Breast epithelium (tissue), 4 donors: ENCODE measurements at regions of chr1 and their contacts with region 1.

Region 1: DNA sequence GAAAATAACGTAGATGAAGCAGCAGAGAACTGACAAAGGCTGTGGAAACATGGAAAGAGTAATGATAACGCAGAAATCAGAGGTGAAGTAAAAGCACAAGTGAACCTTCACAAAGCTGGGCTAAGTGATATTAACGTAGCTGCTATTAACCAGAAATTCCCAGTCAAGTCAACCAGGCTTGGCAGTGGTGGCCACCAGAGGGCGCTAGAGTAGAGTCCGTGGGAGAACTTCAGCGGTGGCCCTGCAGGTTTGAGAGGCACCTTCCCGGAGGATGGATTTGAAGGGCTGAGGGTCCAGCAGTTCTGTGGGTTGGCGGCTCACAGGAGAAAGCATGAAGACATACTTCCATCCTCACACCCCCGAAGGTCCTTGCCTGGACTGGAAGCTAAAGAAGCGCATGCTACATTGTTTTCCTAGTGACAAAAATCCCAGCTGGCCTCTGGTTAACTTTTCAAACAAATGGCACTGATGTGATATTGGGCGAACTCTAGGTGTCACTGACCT is 81.7 kb upstream of the ZNF648 start:
- DNase-seq: peak; percentile 89 to 97
- H3K4me3 ChIP-seq: no peak overlapping the region
- H3K27ac ChIP-seq: peak overlapping the region; percentile 94 to 98
- H3K4me1 ChIP-seq: peaks cover 13 to 15% of the 10 kb centered on the region in 2 donors
- H3K27me3 ChIP-seq: no peaks in the 10 kb centered on the region
- CTCF ChIP-seq: peak; percentile 95 to 98 (median 96)
- POLR2A ChIP-seq: no peak

Region 2: DNA sequence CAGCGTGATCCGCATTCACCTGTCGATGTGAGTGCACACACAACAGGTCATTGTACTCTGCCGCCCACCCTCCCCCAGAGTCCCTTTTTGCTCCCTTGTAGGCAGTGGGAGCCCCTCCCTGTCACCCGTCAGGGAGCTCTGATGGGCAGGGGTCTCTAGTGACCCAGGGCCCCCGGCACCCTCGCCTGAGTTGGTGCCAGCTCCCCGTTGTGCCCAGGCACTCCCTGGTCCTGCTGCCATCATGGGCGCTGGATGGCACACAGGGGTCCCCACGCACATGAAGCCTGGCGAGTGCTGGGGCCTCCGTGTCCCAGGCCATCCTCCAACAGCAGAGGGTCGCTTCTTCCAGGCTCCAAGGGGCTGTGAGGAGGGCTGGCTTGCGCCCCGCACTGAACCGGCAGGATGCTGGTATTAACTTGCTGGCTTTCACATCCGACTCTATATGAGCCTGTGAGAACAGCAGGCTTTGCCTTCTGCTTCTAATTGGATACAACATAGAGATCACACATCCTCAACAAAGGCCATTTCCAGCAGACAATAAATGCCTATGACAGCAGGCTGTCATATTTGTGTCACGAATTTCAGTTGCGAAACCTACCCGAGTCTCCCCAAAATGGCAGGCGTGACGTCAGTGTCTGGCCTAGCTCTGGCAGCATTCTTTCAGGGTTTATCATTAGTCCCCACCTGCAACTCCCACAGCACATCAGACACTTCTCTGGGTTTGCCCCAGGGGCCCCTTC is 1195.1 kb before region 1 on chr1:
- intact Hi-C with region 1: no loop called
- DNase-seq: peak in 1 of 2 donors; percentile 66
- H3K4me3 ChIP-seq: no peak overlapping the region
- H3K27ac ChIP-seq: peak overlapping the region in 1 of 2 donors; percentile 23
- H3K4me1 ChIP-seq: peaks cover 2 to 7% of the 10 kb centered on the region in 2 donors
- H3K27me3 ChIP-seq: no peaks in the 10 kb centered on the region
- CTCF ChIP-seq: no peak
- POLR2A ChIP-seq: no peak

Region 3: DNA sequence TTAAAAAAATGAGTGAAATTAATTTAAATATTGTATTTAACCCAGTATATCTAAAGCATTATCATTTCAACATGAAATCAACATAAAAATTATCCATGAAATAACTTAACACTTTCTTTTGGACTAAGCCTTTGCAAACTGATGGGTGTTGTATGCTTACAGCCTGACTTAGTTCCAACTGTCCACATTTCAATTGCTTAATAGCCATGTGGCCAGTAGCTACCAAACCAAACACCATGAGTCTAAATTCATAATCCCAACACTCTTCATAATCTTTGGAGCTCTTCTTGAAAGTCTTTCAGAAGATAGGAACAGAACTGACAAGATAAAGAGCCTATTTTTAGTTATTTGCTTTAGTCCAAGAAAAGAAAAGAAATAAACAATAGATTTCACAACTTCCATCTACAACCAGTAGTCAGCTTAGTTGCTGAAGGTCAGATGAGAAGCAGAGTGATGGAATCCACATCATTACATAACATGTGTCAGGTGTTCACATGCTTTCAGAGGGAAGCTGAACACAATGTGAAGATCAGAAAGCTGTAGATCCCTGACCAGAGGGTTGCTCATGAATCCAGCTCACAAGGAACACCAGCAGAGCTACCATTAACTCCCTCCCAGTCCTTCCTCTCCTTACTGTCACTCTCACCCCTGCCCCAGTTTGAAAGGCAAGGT is 62.3 kb after region 1 on chr1:
- intact Hi-C with region 1: loop called (anchors 2 kb)
- DNase-seq: no peak
- H3K4me3 ChIP-seq: no peak overlapping the region
- H3K27ac ChIP-seq: peak overlapping the region; percentile 52 to 83
- H3K4me1 ChIP-seq: peaks cover 0 to 8% of the 10 kb centered on the region in 2 donors
- H3K27me3 ChIP-seq: no peaks in the 10 kb centered on the region
- CTCF ChIP-seq: no peak
- POLR2A ChIP-seq: no peak

Region 4: DNA sequence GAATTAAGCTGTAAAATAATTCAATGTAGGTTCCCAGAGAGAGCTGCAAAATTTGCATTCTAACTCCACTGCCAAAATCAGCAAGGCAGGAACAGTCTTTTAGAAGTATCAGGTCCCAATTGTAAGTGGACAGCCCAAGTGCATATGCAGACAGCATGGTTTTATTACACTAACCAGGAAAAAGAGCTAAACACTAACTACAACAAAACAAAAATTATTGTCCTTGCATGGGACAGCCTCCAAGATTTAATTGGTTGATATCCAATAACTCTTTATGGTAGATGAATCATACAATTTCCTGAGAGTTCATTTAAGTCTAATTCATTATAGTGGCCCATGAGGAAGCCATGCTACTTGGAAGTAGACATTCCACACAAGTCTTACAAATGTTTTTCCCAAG is 72.6 kb after region 1 on chr1:
- intact Hi-C with region 1: no loop called
- DNase-seq: no peak
- H3K4me3 ChIP-seq: no peak overlapping the region
- H3K27ac ChIP-seq: no peak overlapping the region
- H3K4me1 ChIP-seq: no peaks in the 10 kb centered on the region
- H3K27me3 ChIP-seq: no peaks in the 10 kb centered on the region
- CTCF ChIP-seq: no peak
- POLR2A ChIP-seq: no peak

Region 5: DNA sequence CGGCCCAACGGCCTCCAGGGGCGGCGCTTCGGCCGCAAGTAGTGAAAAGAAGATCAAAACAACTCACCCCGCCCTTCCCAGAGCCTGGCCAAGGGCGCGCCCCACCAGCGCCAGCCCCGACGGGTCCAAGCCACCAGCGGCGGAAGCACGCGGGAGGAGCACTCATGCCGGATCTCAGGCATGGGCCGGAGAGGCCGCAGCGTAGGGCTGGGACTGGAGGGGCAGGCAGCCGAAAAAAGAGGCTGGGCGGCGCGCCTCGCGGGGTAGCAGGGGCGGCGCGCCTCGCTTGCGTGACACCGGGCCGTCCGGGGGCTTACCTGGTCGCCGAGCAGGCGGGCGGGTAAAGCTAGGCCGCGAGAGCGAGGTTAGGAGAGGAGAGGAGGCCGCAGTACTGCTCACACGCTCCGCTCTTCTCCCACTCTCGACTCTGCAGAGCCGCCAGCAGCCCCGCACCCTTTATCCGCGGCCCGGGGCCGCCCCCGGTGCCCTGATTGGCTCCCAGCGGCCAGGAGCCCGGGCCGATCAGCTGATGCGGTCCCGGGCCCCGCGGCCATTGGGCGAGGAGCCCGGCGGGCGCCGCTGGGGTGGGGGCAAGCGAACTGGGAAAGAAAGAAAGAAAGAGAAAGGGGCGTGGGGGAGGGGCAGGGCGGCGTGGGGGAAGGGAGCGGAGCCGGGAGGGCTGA is 248.3 kb after region 1 on chr1 and contains the start of gene GLUL:
- intact Hi-C with region 1: loop called (anchors 5 kb)
- DNase-seq: peak; percentile 93 to 94
- H3K4me3 ChIP-seq: peak within 1 kb of the TSS; percentile 86 to 96 (median 90)
- H3K27ac ChIP-seq: peak within 1 kb of the TSS; percentile 99
- H3K4me1 ChIP-seq: no peaks in the 10 kb centered on the region
- H3K27me3 ChIP-seq: no peaks in the 10 kb centered on the region
- CTCF ChIP-seq: peak in 1 of 3 donors; percentile 14
- POLR2A ChIP-seq: peak; percentile 97
- total RNA-seq, gene GLUL: 1,940 to 10,612 (median 2,824) TPM

Region 6: DNA sequence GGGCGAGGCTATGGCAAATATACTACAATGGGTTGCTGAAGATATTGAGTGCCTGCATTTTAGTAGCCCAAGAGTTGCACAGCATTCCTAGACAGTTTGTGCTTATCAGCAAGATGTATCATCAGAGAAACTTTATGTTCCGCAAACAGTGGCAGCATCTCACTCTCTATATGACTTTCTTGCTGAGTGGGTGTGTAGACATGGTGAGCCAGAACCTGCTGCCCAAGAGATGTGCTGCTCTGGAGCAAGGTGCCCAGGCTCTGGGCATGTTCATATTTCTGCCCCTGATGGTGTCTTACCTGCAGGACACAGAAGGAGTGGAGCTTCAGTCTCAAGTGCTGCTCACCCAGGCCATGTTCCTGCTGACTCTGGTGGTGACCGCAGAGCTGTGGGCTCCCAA is 298.5 kb after region 1 on chr1:
- intact Hi-C with region 1: no loop called
- DNase-seq: no peak
- H3K4me3 ChIP-seq: no peak overlapping the region
- H3K27ac ChIP-seq: no peak overlapping the region
- H3K4me1 ChIP-seq: no peaks in the 10 kb centered on the region
- H3K27me3 ChIP-seq: no peaks in the 10 kb centered on the region
- CTCF ChIP-seq: no peak
- POLR2A ChIP-seq: no peak

Region 7: GRCh38 chr1:183069562-183070216 is 926.5 kb after region 1 on chr1:
- intact Hi-C with region 1: loop called (anchors 10 kb)
- DNase-seq: no peak
- H3K4me3 ChIP-seq: no peak overlapping the region
- H3K27ac ChIP-seq: no peak overlapping the region
- H3K4me1 ChIP-seq: peaks cover 0 to 4% of the 10 kb centered on the region in 2 donors
- H3K27me3 ChIP-seq: no peaks in the 10 kb centered on the region
- CTCF ChIP-seq: no peak
- POLR2A ChIP-seq: no peak